ENCODE measurements at regions of chr15 and their contacts with region 1.

Region 1: GRCh38 chr15:43285609-43286037 is 18.9 kb upstream of the TGM5 start:
- DNase-seq: peak; percentile 42
- ATAC-seq: peak; percentile 91
- H3K4me3 ChIP-seq: no peak overlapping the region
- H3K27ac ChIP-seq: no peak overlapping the region
- H3K4me1 ChIP-seq: no peaks in the 10 kb centered on the region
- H3K27me3 ChIP-seq: no peaks in the 10 kb centered on the region
- CTCF ChIP-seq: peak; percentile 71 to 93 (median 84)
- EP300 ChIP-seq: no peak
- POLR2A ChIP-seq: no peak
- RAD21 ChIP-seq: peak; percentile 93

Region 2: DNA sequence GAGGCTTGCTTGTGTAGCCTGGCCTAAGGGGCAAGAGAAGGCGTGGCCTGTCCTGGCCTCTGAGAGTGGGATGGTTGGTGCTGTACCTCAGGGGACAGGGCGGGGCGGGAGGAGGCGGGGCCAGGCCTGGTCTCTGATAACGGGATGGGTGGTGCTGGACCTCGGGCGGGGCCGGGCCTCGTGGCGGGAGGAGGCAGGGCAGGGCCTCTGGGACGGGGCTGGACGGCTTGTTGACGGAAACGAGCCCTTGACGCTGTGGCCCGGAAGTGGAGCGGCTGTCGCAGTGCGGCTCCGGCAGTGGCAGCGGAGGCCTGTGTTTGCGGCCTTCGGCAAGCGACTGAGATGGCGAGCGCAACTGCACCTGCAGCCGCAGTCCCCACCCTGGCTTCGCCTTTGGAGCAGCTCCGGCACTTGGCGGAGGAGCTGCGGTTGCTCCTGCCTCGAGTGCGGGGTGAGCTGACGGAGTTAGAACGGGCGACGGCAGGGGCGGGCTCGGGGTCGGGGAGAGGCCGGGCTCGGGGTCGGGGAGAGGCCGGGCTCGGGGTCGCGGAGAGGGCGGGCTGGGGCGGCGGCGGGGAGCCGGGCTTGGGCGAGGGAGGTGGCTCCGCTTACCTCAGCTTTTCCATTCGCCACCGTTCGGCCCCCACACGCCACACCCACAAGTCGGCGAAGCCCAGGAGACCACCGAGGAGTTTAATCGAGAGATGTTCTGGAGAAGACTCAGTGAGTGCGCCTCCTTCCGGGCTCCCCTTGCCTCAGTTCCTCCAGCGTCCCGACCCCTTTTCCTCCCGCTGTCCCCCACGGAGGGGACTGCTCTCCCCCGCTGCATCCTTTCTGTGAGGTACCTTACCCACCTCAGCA is 100.2 kb before region 1 on chr15 and contains the start of gene CCNDBP1:
- CTCF ChIA-PET with region 1: interaction called, 37 read pairs
- POLR2A ChIA-PET with region 1: no interaction called
- RAD21 ChIA-PET with region 1: interaction called, 28 read pairs
- SMC1A ChIA-PET with region 1: interaction called, 12 read pairs
- in situ Hi-C with region 1: no loop called
- intact Hi-C with region 1: loop called (anchors 1 kb)
- DNase-seq: peak; percentile 87
- ATAC-seq: peak; percentile 98
- H3K4me3 ChIP-seq: peak within 1 kb of the TSS; percentile 100
- H3K27ac ChIP-seq: peak within 1 kb of the TSS; percentile 80
- H3K4me1 ChIP-seq: no peaks in the 10 kb centered on the region
- H3K27me3 ChIP-seq: no peaks in the 10 kb centered on the region
- CTCF ChIP-seq: peak; percentile 28 to 32 (median 28); a peak in 5 of 6 replicates
- EP300 ChIP-seq: no peak
- POLR2A ChIP-seq: peak; percentile 98
- RAD21 ChIP-seq: no peak
- polyA plus RNA-seq, gene CCNDBP1: 30.1 to 39.2 TPM

Region 3: GRCh38 chr15:43215961-43216360 is 69.7 kb before region 1 on chr15:
- CTCF ChIA-PET with region 1: interaction called, 12 read pairs
- POLR2A ChIA-PET with region 1: no interaction called
- RAD21 ChIA-PET with region 1: interaction called, 4 read pairs
- SMC1A ChIA-PET with region 1: interaction called, 5 read pairs
- in situ Hi-C with region 1: no loop called
- intact Hi-C with region 1: no loop called
- DNase-seq: no peak
- ATAC-seq: no peak
- H3K4me3 ChIP-seq: no peak overlapping the region
- H3K27ac ChIP-seq: no peak overlapping the region
- H3K4me1 ChIP-seq: no peaks in the 10 kb centered on the region
- H3K27me3 ChIP-seq: no peaks in the 10 kb centered on the region
- CTCF ChIP-seq: no peak
- EP300 ChIP-seq: no peak
- POLR2A ChIP-seq: no peak
- RAD21 ChIP-seq: no peak

Region 4: GRCh38 chr15:43241100-43241499 is 44.5 kb before region 1 on chr15:
- CTCF ChIA-PET with region 1: interaction called, 24 read pairs
- POLR2A ChIA-PET with region 1: no interaction called
- RAD21 ChIA-PET with region 1: interaction called, 4 read pairs
- SMC1A ChIA-PET with region 1: interaction called, 9 read pairs
- in situ Hi-C with region 1: loop called (anchors 10 kb)
- intact Hi-C with region 1: no loop called
- DNase-seq: no peak
- ATAC-seq: no peak
- H3K4me3 ChIP-seq: no peak overlapping the region
- H3K27ac ChIP-seq: no peak overlapping the region
- H3K4me1 ChIP-seq: peaks cover 17% of the 10 kb centered on the region
- H3K27me3 ChIP-seq: no peaks in the 10 kb centered on the region
- CTCF ChIP-seq: no peak
- EP300 ChIP-seq: no peak
- POLR2A ChIP-seq: no peak
- RAD21 ChIP-seq: no peak

Region 5: GRCh38 chr15:43260011-43260615 is 25.5 kb before region 1 on chr15:
- CTCF ChIA-PET with region 1: interaction called, 10 read pairs
- POLR2A ChIA-PET with region 1: no interaction called
- RAD21 ChIA-PET with region 1: interaction called, 4 read pairs
- SMC1A ChIA-PET with region 1: interaction called, 11 read pairs
- in situ Hi-C with region 1: no loop called
- intact Hi-C with region 1: no loop called
- DNase-seq: no peak
- ATAC-seq: 0 out of 3 replicates have a peak, but pooled peaks have one; percentile 19
- H3K4me3 ChIP-seq: no peak overlapping the region
- H3K27ac ChIP-seq: no peak overlapping the region
- H3K4me1 ChIP-seq: no peaks in the 10 kb centered on the region
- H3K27me3 ChIP-seq: no peaks in the 10 kb centered on the region
- CTCF ChIP-seq: no peak
- EP300 ChIP-seq: no peak
- POLR2A ChIP-seq: no peak
- RAD21 ChIP-seq: no peak

Region 6: DNA sequence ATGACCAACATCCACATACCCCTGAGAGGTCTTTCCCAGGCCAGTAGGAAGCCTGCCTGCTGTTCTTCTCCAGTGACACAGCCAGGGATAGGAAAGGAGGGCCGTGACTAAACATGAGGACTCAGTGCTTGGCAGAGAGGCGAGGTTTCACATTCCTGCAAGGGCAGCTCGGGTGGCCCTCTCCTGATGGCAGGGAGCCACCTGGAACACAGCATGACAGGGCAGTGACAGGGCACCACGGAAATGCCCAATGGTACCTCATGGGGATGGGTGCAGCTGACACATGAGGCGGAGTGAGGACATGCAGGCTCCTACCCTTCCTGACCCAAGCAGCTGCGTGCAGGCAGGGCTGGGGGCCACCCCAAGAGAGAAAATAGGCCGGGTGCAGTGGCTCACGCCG is 11.5 kb before region 1 on chr15:
- CTCF ChIA-PET with region 1: interaction called, 37 read pairs
- POLR2A ChIA-PET with region 1: interaction called, 3 read pairs
- RAD21 ChIA-PET with region 1: interaction called, 11 read pairs
- SMC1A ChIA-PET with region 1: interaction called, 21 read pairs
- in situ Hi-C with region 1: no loop called
- intact Hi-C with region 1: no loop called
- DNase-seq: no peak
- ATAC-seq: no peak
- H3K4me3 ChIP-seq: no peak overlapping the region
- H3K27ac ChIP-seq: no peak overlapping the region
- H3K4me1 ChIP-seq: no peaks in the 10 kb centered on the region
- H3K27me3 ChIP-seq: no peaks in the 10 kb centered on the region
- CTCF ChIP-seq: no peak
- EP300 ChIP-seq: no peak
- POLR2A ChIP-seq: no peak
- RAD21 ChIP-seq: no peak

Region 7: DNA sequence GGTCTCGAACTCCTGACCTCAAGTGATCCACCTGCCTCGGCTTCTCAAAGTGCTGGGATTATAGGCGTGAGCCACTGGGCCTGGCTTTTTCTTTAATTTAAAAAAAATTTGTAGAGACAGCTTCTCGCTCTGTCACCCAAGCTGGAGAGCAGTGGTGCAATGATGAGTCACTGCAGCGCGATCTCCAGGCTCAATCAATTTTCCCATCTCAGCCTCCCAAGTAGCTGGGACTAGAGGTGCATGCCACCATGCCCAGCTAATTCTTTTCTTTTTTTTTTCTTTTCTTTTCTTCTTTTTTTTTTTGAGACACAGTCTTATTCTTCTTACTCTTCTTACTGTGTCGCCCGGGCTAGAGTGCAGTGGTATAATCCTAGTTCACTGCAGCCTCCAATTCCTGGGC is 105.1 kb after region 1 on chr15:
- CTCF ChIA-PET with region 1: no interaction called
- POLR2A ChIA-PET with region 1: no interaction called
- RAD21 ChIA-PET with region 1: no interaction called
- SMC1A ChIA-PET with region 1: no interaction called
- in situ Hi-C with region 1: no loop called
- intact Hi-C with region 1: no loop called
- DNase-seq: no peak
- ATAC-seq: no peak
- H3K4me3 ChIP-seq: no peak overlapping the region
- H3K27ac ChIP-seq: no peak overlapping the region
- H3K4me1 ChIP-seq: no peaks in the 10 kb centered on the region
- H3K27me3 ChIP-seq: no peaks in the 10 kb centered on the region
- CTCF ChIP-seq: no peak
- EP300 ChIP-seq: no peak
- POLR2A ChIP-seq: no peak
- RAD21 ChIP-seq: no peak